GM13976 (cell line): ENCODE measurements at regions of chr1 and their contacts with region 1.

Region 1: GRCh38 chr1:235504496-235505222 is 407 bp upstream of the B3GALNT2 start:
- DNase-seq: peak; percentile 96
- CTCF ChIP-seq: peak; percentile 82

Region 2: DNA sequence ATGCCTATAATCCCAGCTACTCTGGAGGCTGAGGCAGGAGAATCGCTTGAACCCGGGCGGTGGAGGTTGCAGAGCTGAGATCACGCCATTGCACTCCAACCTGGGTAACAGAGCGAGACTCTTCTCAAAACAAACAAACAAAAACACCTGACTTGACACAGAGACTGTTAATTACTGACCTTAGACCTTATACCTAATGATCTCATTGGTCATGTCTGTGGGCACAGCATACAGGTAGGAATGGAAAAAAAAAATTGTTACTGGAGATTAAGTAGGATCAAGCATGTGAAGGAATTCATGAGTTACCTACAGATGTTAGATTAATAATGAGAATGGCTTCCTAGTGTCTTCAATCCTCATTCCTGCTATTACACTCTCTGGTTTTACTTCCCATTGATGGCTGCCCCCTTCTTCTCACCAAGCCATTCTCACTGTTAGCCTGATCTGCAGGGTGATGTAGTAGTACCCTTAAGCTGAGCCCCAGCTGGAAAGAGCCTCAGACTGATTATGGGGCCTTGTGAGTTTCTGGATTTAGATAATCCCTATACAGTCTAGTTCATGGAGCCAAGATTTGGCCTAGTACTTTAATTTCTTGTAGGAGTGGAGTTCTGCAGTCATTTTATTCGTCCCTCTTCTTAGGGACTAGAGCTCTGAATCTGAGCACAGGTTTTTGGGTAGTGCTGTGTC is 128.6 kb before region 1 on chr1:
- in situ Hi-C with region 1: no loop called
- DNase-seq: no peak
- CTCF ChIP-seq: no peak

Region 3: DNA sequence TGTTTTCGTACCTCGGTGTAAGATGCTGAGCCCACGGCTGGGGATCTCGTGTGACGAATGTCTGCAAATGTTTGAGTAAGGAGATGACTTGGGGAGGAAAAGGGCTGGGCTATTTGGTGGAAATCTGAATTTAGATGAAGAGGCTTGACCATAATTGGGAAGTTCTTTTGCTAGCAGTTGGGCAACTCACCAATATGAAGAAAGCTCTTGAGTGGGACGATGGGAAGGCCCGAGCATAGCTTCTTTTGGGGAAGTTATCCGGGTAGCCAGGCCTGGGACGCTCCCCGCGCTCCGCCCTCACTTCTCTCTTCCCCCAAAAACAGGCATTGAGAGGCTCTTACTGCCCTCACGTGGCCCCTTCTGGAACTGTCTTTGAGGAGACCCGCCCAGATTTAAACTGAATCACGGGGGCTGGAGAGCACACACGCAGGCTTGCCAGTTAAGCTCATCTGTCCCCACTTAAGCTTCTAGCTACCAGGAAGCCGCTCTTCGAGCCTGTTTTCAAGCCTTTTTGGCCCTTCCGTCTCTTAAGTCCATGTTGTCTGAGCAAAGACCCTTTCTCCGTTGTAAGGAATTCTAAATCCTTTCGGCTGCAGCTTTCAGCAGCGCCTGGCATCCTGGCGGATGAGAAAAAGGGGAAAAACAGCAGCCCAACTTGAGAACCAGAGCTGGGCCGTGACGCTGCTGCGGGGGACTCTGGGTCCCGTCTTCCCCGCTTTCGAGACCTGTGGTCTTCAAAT is 467.1 kb after region 1 on chr1:
- in situ Hi-C with region 1: loop called (anchors 25 kb)
- DNase-seq: peak; percentile 86
- CTCF ChIP-seq: peak; percentile 91